ENCODE measurements at regions of chr4 and their contacts with region 1.

Region 1: GRCh38 chr4:55444827-55445226 is 49.1 kb downstream of the TMEM165 start:
- DNase-seq: no peak
- H3K4me3 ChIP-seq: no peak overlapping the region
- H3K4me3 Mint-ChIP-seq: no peak overlapping the region
- H3K27ac ChIP-seq: no peak overlapping the region
- H3K27ac Mint-ChIP-seq: peak overlapping the region in 1 of 7 donors; percentile 36
- H3K4me1 ChIP-seq: peaks cover 10% of the 10 kb centered on the region
- H3K4me1 Mint-ChIP-seq: peaks cover 6 to 12% (median 9%) of the 10 kb centered on the region in 4 donors
- H3K27me3 ChIP-seq: no peaks in the 10 kb centered on the region
- H3K27me3 Mint-ChIP-seq: no peaks in the 10 kb centered on the region

Region 2: DNA sequence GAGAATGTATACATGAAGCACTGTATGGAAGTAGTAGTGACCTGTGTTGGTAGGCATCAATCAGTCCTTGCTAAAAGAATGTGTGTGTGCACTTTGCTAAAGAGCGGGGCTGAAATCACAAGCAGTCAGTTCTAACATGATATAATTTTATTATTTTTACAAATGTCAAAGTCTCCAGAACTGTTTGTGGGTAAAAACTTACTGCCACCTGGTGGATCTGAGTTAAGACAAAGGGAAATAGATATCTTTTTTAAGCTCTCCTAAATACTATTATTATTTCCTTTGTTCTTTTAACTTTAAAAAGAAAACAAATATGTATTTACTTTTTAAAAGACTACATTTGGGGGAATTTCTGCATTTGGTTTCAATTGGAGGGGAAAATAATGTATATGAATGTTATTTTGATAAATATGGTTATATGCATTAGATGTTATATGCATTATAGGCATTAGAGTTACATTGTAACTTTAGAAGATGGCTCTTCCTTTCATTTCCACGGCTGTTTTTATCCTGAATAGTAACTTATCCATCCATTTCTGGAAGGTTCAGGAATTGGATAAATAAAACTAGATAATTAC is 109.7 kb after region 1 on chr4:
- CTCF ChIA-PET with region 1: interaction called, 24 read pairs
- POLR2A ChIA-PET with region 1: no interaction called
- intact Hi-C with region 1: loop called (anchors 1 kb)
- DNase-seq: peak in 4 of 5 donors; percentile 36 to 48 (median 41)
- H3K4me3 ChIP-seq: no peak overlapping the region
- H3K4me3 Mint-ChIP-seq: no peak overlapping the region
- H3K27ac ChIP-seq: no peak overlapping the region
- H3K27ac Mint-ChIP-seq: no peak overlapping the region
- H3K4me1 ChIP-seq: peaks cover 9% of the 10 kb centered on the region
- H3K4me1 Mint-ChIP-seq: peaks cover 3 to 19% (median 8%) of the 10 kb centered on the region in 4 donors
- H3K27me3 ChIP-seq: no peaks in the 10 kb centered on the region
- H3K27me3 Mint-ChIP-seq: peaks cover 6 to 9% of the 10 kb centered on the region in 2 donors